ENCODE measurements at regions of chr18 and their contacts with region 1.

Region 1: GRCh38 chr18:12589448-12589847 is 68.5 kb downstream of the SPIRE1 start:
- DNase-seq: no peak
- ATAC-seq: no peak
- H3K4me3 ChIP-seq: no peak overlapping the region
- H3K27ac ChIP-seq: no peak overlapping the region
- H3K4me1 ChIP-seq: no peaks in the 10 kb centered on the region; a peak in 1 of 5 replicates
- H3K27me3 ChIP-seq: no peaks in the 10 kb centered on the region
- CTCF ChIP-seq: no peak
- EP300 ChIP-seq: no peak
- POLR2A ChIP-seq: no peak
- RAD21 ChIP-seq: no peak

Region 2: GRCh38 chr18:12520442-12520992 is 68.9 kb before region 1 on chr18:
- CTCF ChIA-PET with region 1: no interaction called
- POLR2A ChIA-PET with region 1: interaction called, 3 read pairs
- in situ Hi-C with region 1: no loop called
- intact Hi-C with region 1: loop called (anchors 10 kb)
- DNase-seq: no peak
- ATAC-seq: no peak
- H3K4me3 ChIP-seq: no peak overlapping the region
- H3K27ac ChIP-seq: no peak overlapping the region
- H3K4me1 ChIP-seq: 0 out of 5 replicates have a peak, but pooled peaks cover 0 to 7% of the 10 kb centered on the region in 2 experiments
- H3K27me3 ChIP-seq: no peaks in the 10 kb centered on the region
- CTCF ChIP-seq: no peak
- EP300 ChIP-seq: no peak
- POLR2A ChIP-seq: no peak
- RAD21 ChIP-seq: no peak